Activated B cell treated with CpG ODN at 0.5 μM for 24 hours (primary cell): ENCODE measurements at regions of chr21 and their contacts with region 1.

Region 1: GRCh38 chr21:44338971-44339910 is at the start of gene CFAP410:
- DNase-seq: peak; percentile 97
- ATAC-seq: peak; percentile 86
- H3K4me3 Mint-ChIP-seq: peak within 1 kb of the TSS; percentile 89
- H3K27ac Mint-ChIP-seq: peak within 1 kb of the TSS; percentile 93
- H3K4me1 Mint-ChIP-seq: peaks cover 24% of the 10 kb centered on the region
- H3K27me3 Mint-ChIP-seq: no peaks in the 10 kb centered on the region
- CTCF ChIP-seq: no peak
- total RNA-seq, gene CFAP410: 50.6 and 62.3 TPM in 2 replicates

Region 2: DNA sequence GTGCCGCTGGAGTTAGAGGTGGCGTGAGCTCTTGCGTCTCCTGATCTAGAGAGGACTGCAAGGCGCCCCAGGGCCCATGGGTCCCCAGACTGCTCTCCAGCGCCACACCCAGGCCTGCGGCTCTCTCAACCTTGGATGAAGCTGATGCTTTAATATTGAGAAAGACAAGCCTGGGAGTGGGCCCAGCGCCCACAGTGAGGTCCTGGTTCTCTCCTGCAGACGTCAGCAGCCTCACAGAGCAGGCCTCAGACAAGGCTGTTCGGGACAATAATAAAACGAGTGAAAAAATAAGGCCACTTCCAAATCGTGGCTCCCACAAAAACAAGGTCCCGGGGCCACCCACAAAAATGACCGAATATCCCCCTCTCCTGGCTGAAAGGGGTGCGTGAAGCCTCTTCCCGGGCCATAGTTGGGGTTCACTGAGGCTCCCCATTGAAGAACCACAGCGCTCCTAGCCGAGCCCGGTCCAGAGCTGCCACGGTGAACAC is 71.5 kb before region 1 on chr21:
- CTCF ChIA-PET with region 1: no interaction called
- POLR2A ChIA-PET with region 1: no interaction called
- intact Hi-C with region 1: no loop called
- DNase-seq: no peak
- ATAC-seq: peak; percentile 57
- H3K4me3 Mint-ChIP-seq: no peak overlapping the region
- H3K27ac Mint-ChIP-seq: no peak overlapping the region
- H3K4me1 Mint-ChIP-seq: peaks cover 7% of the 10 kb centered on the region
- H3K27me3 Mint-ChIP-seq: peaks cover 1% of the 10 kb centered on the region
- CTCF ChIP-seq: no peak

Region 3: GRCh38 chr21:44299458-44300261 is 39.6 kb before region 1 on chr21 and contains the start of gene PFKL:
- CTCF ChIA-PET with region 1: interaction called, 3 read pairs
- POLR2A ChIA-PET with region 1: interaction called, 4 read pairs
- intact Hi-C with region 1: loop called (anchors 1 kb)
- DNase-seq: peak; percentile 80
- ATAC-seq: peak; percentile 65
- H3K4me3 Mint-ChIP-seq: peak within 1 kb of the TSS; percentile 86
- H3K27ac Mint-ChIP-seq: peak within 1 kb of the TSS; percentile 95
- H3K4me1 Mint-ChIP-seq: peaks cover 73% of the 10 kb centered on the region
- H3K27me3 Mint-ChIP-seq: no peaks in the 10 kb centered on the region
- CTCF ChIP-seq: no peak
- total RNA-seq, gene PFKL: 167 and 174 TPM in 2 replicates

Region 4: GRCh38 chr21:44310628-44311511 is 28.4 kb before region 1 on chr21:
- CTCF ChIA-PET with region 1: no interaction called
- POLR2A ChIA-PET with region 1: no interaction called
- intact Hi-C with region 1: no loop called
- DNase-seq: no peak
- ATAC-seq: peak; percentile 49
- H3K4me3 Mint-ChIP-seq: no peak overlapping the region
- H3K27ac Mint-ChIP-seq: no peak overlapping the region
- H3K4me1 Mint-ChIP-seq: peaks cover 3% of the 10 kb centered on the region
- H3K27me3 Mint-ChIP-seq: no peaks in the 10 kb centered on the region
- CTCF ChIP-seq: no peak

Region 5: GRCh38 chr21:44360159-44360558 is 20.9 kb after region 1 on chr21:
- CTCF ChIA-PET with region 1: no interaction called
- POLR2A ChIA-PET with region 1: interaction called, 19 read pairs
- intact Hi-C with region 1: loop called (anchors 1 kb)
- DNase-seq: no peak
- ATAC-seq: peak; percentile 59
- H3K4me3 Mint-ChIP-seq: no peak overlapping the region
- H3K27ac Mint-ChIP-seq: no peak overlapping the region
- H3K4me1 Mint-ChIP-seq: peaks cover 26% of the 10 kb centered on the region
- H3K27me3 Mint-ChIP-seq: no peaks in the 10 kb centered on the region
- CTCF ChIP-seq: no peak

Region 6: GRCh38 chr21:44377201-44377921 is 38.1 kb after region 1 on chr21:
- CTCF ChIA-PET with region 1: no interaction called
- POLR2A ChIA-PET with region 1: no interaction called
- intact Hi-C with region 1: no loop called
- DNase-seq: no peak
- ATAC-seq: no peak
- H3K4me3 Mint-ChIP-seq: no peak overlapping the region
- H3K27ac Mint-ChIP-seq: no peak overlapping the region
- H3K4me1 Mint-ChIP-seq: peaks cover 23% of the 10 kb centered on the region
- H3K27me3 Mint-ChIP-seq: no peaks in the 10 kb centered on the region
- CTCF ChIP-seq: no peak

Region 7: GRCh38 chr21:44454747-44455523 is 115.7 kb after region 1 on chr21 and contains the start of gene LRRC3:
- CTCF ChIA-PET with region 1: no interaction called
- POLR2A ChIA-PET with region 1: interaction called, 9 read pairs
- intact Hi-C with region 1: loop called (anchors 1 kb)
- DNase-seq: peak; percentile 71
- ATAC-seq: peak; percentile 82
- H3K4me3 Mint-ChIP-seq: peak within 1 kb of the TSS; percentile 75
- H3K27ac Mint-ChIP-seq: no peak within 1 kb of the TSS
- H3K4me1 Mint-ChIP-seq: peaks cover 2% of the 10 kb centered on the region
- H3K27me3 Mint-ChIP-seq: peaks cover 4% of the 10 kb centered on the region
- CTCF ChIP-seq: no peak
- total RNA-seq, gene LRRC3: 0.91 and 1.00 TPM in 2 replicates

Region 8: GRCh38 chr21:44792702-44793591 is 453.7 kb after region 1 on chr21:
- CTCF ChIA-PET with region 1: no interaction called
- POLR2A ChIA-PET with region 1: interaction called, 3 read pairs
- intact Hi-C with region 1: loop called (anchors 5 kb)
- DNase-seq: no peak
- ATAC-seq: peak; percentile 84
- H3K4me3 Mint-ChIP-seq: no peak overlapping the region
- H3K27ac Mint-ChIP-seq: no peak overlapping the region
- H3K4me1 Mint-ChIP-seq: peaks cover 49% of the 10 kb centered on the region
- H3K27me3 Mint-ChIP-seq: no peaks in the 10 kb centered on the region
- CTCF ChIP-seq: peak; percentile 68

Region 9: GRCh38 chr21:44873356-44874239 is 534.4 kb after region 1 on chr21 and contains the start of gene PTTG1IP:
- CTCF ChIA-PET with region 1: no interaction called
- POLR2A ChIA-PET with region 1: no interaction called
- intact Hi-C with region 1: loop called (anchors 2 kb)
- DNase-seq: peak; percentile 98
- ATAC-seq: peak; percentile 81
- H3K4me3 Mint-ChIP-seq: peak within 1 kb of the TSS; percentile 92
- H3K27ac Mint-ChIP-seq: peak within 1 kb of the TSS; percentile 92
- H3K4me1 Mint-ChIP-seq: peaks cover 63% of the 10 kb centered on the region
- H3K27me3 Mint-ChIP-seq: no peaks in the 10 kb centered on the region
- CTCF ChIP-seq: no peak
- total RNA-seq, gene PTTG1IP: 35.3 and 36.6 TPM in 2 replicates